ACHN (cell line): ENCODE measurements at regions of chr12 and their contacts with region 1.

Region 1: GRCh38 chr12:27940756-27941402 is 31.7 kb downstream of the PTHLH start:
- DNase-seq: peak; percentile 85

Region 2: GRCh38 chr12:27733052-27733656 is 207.7 kb before region 1 on chr12:
- in situ Hi-C with region 1: loop called (anchors 25 kb)
- DNase-seq: peak; percentile 61